ENCODE measurements at regions of chr15 and their contacts with region 1.

Region 1: DNA sequence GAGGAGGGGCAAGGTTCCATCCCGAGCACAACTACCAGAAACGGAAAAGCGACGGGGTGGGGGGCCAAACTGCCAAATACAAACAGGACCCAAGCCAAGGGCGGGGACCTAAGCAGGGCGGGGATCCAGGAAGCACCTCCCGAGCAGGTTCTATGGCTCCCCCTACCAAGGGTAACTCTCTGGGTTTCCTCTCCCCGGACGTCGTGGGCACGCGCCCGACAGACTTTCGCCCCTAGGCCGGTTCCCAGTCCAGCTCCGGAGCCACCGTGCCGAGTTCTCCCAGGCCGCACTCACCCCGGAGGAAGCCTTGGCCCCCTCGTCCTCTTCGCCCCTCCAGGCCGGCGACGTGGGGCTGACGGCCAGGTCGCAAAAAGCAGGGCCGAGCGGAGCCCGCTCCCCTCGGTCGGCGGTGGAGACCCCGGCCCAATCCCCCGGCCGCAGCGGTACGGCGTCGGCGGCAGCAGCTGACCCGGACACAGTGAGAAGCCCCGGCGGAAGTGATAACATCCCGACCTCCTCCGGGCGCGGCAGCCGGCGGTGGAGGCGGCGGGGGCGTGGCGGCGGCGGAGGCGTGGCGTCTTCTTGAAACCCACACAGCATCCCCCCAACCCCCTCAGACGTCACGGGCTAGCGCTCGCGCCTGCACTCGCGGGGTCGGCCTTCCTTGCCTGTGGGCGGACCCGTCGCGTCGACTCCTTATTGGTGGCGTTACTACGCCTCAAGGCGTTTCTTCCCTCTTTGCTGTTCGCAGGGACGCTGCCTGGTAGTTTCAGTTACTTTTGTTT is at the start of gene BNIP2:
- DNase-seq: peak; percentile 97
- ATAC-seq: peak; percentile 87
- H3K4me3 Mint-ChIP-seq: peak within 1 kb of the TSS; percentile 92
- H3K27ac Mint-ChIP-seq: peak within 1 kb of the TSS; percentile 96
- H3K4me1 Mint-ChIP-seq: peaks cover 52% of the 10 kb centered on the region
- H3K27me3 Mint-ChIP-seq: no peaks in the 10 kb centered on the region
- CTCF ChIP-seq: no peak
- total RNA-seq, gene BNIP2: 80.1 and 82.9 TPM in 2 replicates

Region 2: DNA sequence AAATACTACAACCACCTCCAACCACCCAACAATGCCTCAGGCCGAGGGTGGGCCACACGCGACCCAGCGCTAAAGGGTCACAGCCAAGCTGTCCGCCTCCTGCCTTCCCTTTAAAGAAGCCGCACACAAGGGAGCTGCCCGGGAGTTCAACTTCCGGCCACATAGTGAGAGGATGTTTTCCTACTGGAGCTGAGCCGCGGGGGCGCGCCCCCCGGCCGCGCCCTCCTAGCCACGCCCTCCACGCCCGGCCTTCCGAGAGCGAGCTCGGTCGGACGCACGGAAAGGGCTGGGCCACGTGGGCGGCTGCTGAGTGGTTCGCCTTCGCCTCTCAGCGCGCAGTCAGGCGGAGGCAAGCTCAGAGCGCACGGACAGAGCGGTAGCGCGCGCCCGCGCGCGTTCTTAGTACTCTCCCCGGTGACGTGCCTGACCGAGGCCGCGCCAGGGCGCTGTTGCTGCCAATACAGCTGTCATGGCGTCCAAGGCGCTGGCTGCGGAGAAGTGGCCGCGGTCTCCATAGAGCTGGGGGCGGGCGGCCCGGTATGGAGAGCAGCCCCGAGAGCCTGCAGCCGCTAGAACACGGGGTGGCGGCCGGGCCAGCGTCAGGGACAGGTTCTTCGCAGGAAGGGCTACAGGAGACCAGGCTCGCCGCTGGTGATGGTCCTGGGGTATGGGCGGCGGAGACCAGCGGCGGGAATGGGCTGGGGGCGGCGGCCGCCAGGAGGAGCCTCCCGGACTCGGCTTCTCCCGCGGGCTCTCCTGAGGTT is 918.0 kb before region 1 on chr15 and contains the start of gene MINDY2:
- CTCF ChIA-PET with region 1: interaction called, 3 read pairs
- POLR2A ChIA-PET with region 1: interaction called, 4 read pairs
- intact Hi-C with region 1: loop called (anchors 1 kb)
- DNase-seq: peak; percentile 89
- ATAC-seq: peak; percentile 94
- H3K4me3 Mint-ChIP-seq: peak within 1 kb of the TSS; percentile 93
- H3K27ac Mint-ChIP-seq: peak within 1 kb of the TSS; percentile 96
- H3K4me1 Mint-ChIP-seq: peaks cover 6% of the 10 kb centered on the region
- H3K27me3 Mint-ChIP-seq: no peaks in the 10 kb centered on the region
- CTCF ChIP-seq: no peak
- total RNA-seq, gene MINDY2: 5.8 and 6.2 TPM in 2 replicates

Region 3: GRCh38 chr15:59299929-59300617 is 389.0 kb before region 1 on chr15:
- CTCF ChIA-PET with region 1: no interaction called
- POLR2A ChIA-PET with region 1: no interaction called
- intact Hi-C with region 1: loop called (anchors 5 kb)
- DNase-seq: peak; percentile 58
- ATAC-seq: peak; percentile 76
- H3K4me3 Mint-ChIP-seq: peak overlapping the region; percentile 71
- H3K27ac Mint-ChIP-seq: peak overlapping the region; percentile 94
- H3K4me1 Mint-ChIP-seq: peaks cover 93% of the 10 kb centered on the region
- H3K27me3 Mint-ChIP-seq: no peaks in the 10 kb centered on the region
- CTCF ChIP-seq: no peak

Region 4: GRCh38 chr15:59632714-59633113 is 56.3 kb before region 1 on chr15:
- CTCF ChIA-PET with region 1: no interaction called
- POLR2A ChIA-PET with region 1: no interaction called
- intact Hi-C with region 1: no loop called
- DNase-seq: no peak
- ATAC-seq: no peak
- H3K4me3 Mint-ChIP-seq: no peak overlapping the region
- H3K27ac Mint-ChIP-seq: no peak overlapping the region
- H3K4me1 Mint-ChIP-seq: no peaks in the 10 kb centered on the region
- H3K27me3 Mint-ChIP-seq: no peaks in the 10 kb centered on the region
- CTCF ChIP-seq: no peak

Region 5: GRCh38 chr15:59668556-59668955 is 20.5 kb before region 1 on chr15:
- CTCF ChIA-PET with region 1: no interaction called
- POLR2A ChIA-PET with region 1: interaction called, 4 read pairs
- intact Hi-C with region 1: loop called (anchors 2 kb)
- DNase-seq: no peak
- ATAC-seq: no peak
- H3K4me3 Mint-ChIP-seq: no peak overlapping the region
- H3K27ac Mint-ChIP-seq: no peak overlapping the region
- H3K4me1 Mint-ChIP-seq: no peaks in the 10 kb centered on the region
- H3K27me3 Mint-ChIP-seq: no peaks in the 10 kb centered on the region
- CTCF ChIP-seq: no peak

Region 6: DNA sequence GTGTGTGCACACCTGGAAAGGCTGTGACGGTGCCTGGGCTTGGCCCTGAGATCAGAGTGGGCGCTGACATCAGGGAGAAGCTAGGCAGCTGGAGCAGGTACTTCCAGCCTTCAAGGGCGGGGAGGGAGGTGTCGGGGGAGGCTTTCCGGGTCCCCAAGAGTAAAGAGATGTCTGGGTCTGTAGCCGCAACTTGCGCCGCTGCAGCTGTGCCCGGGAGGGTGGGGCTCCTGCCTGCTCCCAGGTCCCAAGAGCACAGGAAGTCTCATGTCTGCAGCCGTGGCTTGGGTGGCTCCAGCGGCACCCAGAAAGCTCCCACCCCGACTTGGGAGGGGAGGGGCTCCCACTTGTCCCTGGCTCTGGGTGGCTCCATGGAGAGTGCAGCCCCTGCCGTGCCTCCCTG is 103.3 kb after region 1 on chr15:
- CTCF ChIA-PET with region 1: no interaction called
- POLR2A ChIA-PET with region 1: no interaction called
- intact Hi-C with region 1: no loop called
- DNase-seq: no peak
- ATAC-seq: no peak
- H3K4me3 Mint-ChIP-seq: no peak overlapping the region
- H3K27ac Mint-ChIP-seq: no peak overlapping the region
- H3K4me1 Mint-ChIP-seq: no peaks in the 10 kb centered on the region
- H3K27me3 Mint-ChIP-seq: peaks cover 19% of the 10 kb centered on the region
- CTCF ChIP-seq: no peak

Region 7: GRCh38 chr15:59997070-59997701 is 308.2 kb after region 1 on chr15:
- CTCF ChIA-PET with region 1: no interaction called
- POLR2A ChIA-PET with region 1: no interaction called
- intact Hi-C with region 1: no loop called
- DNase-seq: peak; percentile 17
- ATAC-seq: no peak
- H3K4me3 Mint-ChIP-seq: no peak overlapping the region
- H3K27ac Mint-ChIP-seq: no peak overlapping the region
- H3K4me1 Mint-ChIP-seq: peaks cover 10% of the 10 kb centered on the region
- H3K27me3 Mint-ChIP-seq: peaks cover 89% of the 10 kb centered on the region
- CTCF ChIP-seq: no peak

Region 8: GRCh38 chr15:60179786-60180391 is 490.9 kb after region 1 on chr15:
- CTCF ChIA-PET with region 1: interaction called, 38 read pairs
- POLR2A ChIA-PET with region 1: interaction called, 5 read pairs
- intact Hi-C with region 1: loop called (anchors 1 kb)
- DNase-seq: no peak
- ATAC-seq: peak; percentile 64
- H3K4me3 Mint-ChIP-seq: no peak overlapping the region
- H3K27ac Mint-ChIP-seq: no peak overlapping the region
- H3K4me1 Mint-ChIP-seq: no peaks in the 10 kb centered on the region
- H3K27me3 Mint-ChIP-seq: peaks cover 24% of the 10 kb centered on the region
- CTCF ChIP-seq: peak; percentile 47

Region 9: DNA sequence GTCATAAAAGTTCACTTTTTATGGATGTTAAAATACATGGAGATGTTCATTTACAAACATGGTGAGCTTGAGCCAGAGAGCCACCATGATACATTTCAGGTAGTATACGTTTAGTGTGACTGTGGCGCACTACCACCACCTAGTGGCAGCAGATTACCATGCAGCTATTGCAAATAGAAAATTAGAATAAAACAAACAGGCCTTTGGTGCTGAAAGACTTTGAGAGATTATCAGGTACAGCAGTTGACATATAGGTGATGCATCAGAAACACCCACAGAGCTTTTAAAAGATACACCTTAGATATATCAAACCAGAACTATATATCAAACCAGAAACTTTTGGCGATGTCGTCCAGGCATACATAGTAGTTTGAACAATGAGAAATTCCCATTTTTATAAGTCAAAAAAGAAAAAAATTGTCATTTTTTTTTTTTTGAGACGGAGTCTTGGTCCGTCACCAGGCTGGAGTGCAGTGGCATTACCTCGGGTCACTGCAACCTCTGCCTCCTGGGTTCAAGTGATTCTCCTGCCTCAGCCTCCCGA is 831.9 kb after region 1 on chr15:
- CTCF ChIA-PET with region 1: interaction called, 10 read pairs
- POLR2A ChIA-PET with region 1: interaction called, 4 read pairs
- intact Hi-C with region 1: loop called (anchors 1 kb)
- DNase-seq: peak; percentile 51
- ATAC-seq: peak; percentile 95
- H3K4me3 Mint-ChIP-seq: peak overlapping the region; percentile 17
- H3K27ac Mint-ChIP-seq: no peak overlapping the region
- H3K4me1 Mint-ChIP-seq: peaks cover 12% of the 10 kb centered on the region
- H3K27me3 Mint-ChIP-seq: no peaks in the 10 kb centered on the region
- CTCF ChIP-seq: peak; percentile 100